SK-N-SH (cell line): ENCODE measurements at regions of chr12 and their contacts with region 1.

Region 1: GRCh38 chr12:39383114-39383513 is 59.8 kb downstream of the KIF21A start:
- DNase-seq: no peak
- H3K4me3 ChIP-seq: no peak overlapping the region
- H3K27ac ChIP-seq: peak overlapping the region in 1 of 2 experiments; percentile 99; a peak in 2 of 4 replicates
- H3K4me1 ChIP-seq: peaks cover 0 to 34% of the 10 kb centered on the region in 2 experiments; a peak in 2 of 4 replicates
- H3K27me3 ChIP-seq: no peaks in the 10 kb centered on the region
- CTCF ChIP-seq: no peak
- EP300 ChIP-seq: peak in 1 of 2 experiments; percentile 89; a peak in 2 of 4 replicates
- RAD21 ChIP-seq: no peak

Region 2: GRCh38 chr12:39365364-39366001 is 17.6 kb before region 1 on chr12:
- CTCF ChIA-PET with region 1: interaction called, 12 read pairs
- POLR2A ChIA-PET with region 1: no interaction called
- DNase-seq: no peak
- H3K4me3 ChIP-seq: no peak overlapping the region
- H3K27ac ChIP-seq: no peak overlapping the region
- H3K4me1 ChIP-seq: no peaks in the 10 kb centered on the region
- H3K27me3 ChIP-seq: no peaks in the 10 kb centered on the region
- CTCF ChIP-seq: peak; percentile 38
- EP300 ChIP-seq: no peak
- RAD21 ChIP-seq: peak; percentile 29; the same call in 1 of the 2 replicates

Region 3: GRCh38 chr12:39413836-39414771 is 31.0 kb after region 1 on chr12:
- CTCF ChIA-PET with region 1: no interaction called
- POLR2A ChIA-PET with region 1: no interaction called
- DNase-seq: peak; percentile 53
- H3K4me3 ChIP-seq: no peak overlapping the region
- H3K27ac ChIP-seq: peak overlapping the region in 1 of 2 experiments; percentile 82; a peak in 2 of 4 replicates
- H3K4me1 ChIP-seq: peaks cover 0 to 14% of the 10 kb centered on the region in 2 experiments; a peak in 2 of 4 replicates
- H3K27me3 ChIP-seq: no peaks in the 10 kb centered on the region
- CTCF ChIP-seq: no peak
- EP300 ChIP-seq: peak in 1 of 2 experiments; percentile 55; a peak in 1 of 4 replicates
- RAD21 ChIP-seq: no peak

Region 4: GRCh38 chr12:39541471-39541870 is 158.4 kb after region 1 on chr12:
- CTCF ChIA-PET with region 1: no interaction called
- POLR2A ChIA-PET with region 1: no interaction called
- DNase-seq: no peak
- H3K4me3 ChIP-seq: no peak overlapping the region
- H3K27ac ChIP-seq: no peak overlapping the region
- H3K4me1 ChIP-seq: peaks cover 0 to 3% of the 10 kb centered on the region in 2 experiments; a peak in 1 of 4 replicates
- H3K27me3 ChIP-seq: no peaks in the 10 kb centered on the region
- CTCF ChIP-seq: no peak
- EP300 ChIP-seq: no peak
- RAD21 ChIP-seq: no peak